Activated B cell treated with CpG ODN at 0.5 μM for 24 hours (primary cell): ENCODE measurements at regions of chr3 and their contacts with region 1.

Region 1: GRCh38 chr3:17372362-17373210 is 369.8 kb downstream of the TBC1D5 start:
- DNase-seq: no peak
- ATAC-seq: no peak
- H3K4me3 Mint-ChIP-seq: no peak overlapping the region
- H3K27ac Mint-ChIP-seq: no peak overlapping the region
- H3K4me1 Mint-ChIP-seq: no peaks in the 10 kb centered on the region
- H3K27me3 Mint-ChIP-seq: no peaks in the 10 kb centered on the region
- CTCF ChIP-seq: no peak

Region 2: GRCh38 chr3:17407576-17407975 is 35.0 kb after region 1 on chr3:
- CTCF ChIA-PET with region 1: no interaction called
- POLR2A ChIA-PET with region 1: no interaction called
- intact Hi-C with region 1: loop called (anchors 5 kb)
- DNase-seq: no peak
- ATAC-seq: no peak
- H3K4me3 Mint-ChIP-seq: no peak overlapping the region
- H3K27ac Mint-ChIP-seq: no peak overlapping the region
- H3K4me1 Mint-ChIP-seq: no peaks in the 10 kb centered on the region
- H3K27me3 Mint-ChIP-seq: no peaks in the 10 kb centered on the region
- CTCF ChIP-seq: no peak